ENCODE measurements at regions of chr20 and their contacts with region 1.

Region 1: DNA sequence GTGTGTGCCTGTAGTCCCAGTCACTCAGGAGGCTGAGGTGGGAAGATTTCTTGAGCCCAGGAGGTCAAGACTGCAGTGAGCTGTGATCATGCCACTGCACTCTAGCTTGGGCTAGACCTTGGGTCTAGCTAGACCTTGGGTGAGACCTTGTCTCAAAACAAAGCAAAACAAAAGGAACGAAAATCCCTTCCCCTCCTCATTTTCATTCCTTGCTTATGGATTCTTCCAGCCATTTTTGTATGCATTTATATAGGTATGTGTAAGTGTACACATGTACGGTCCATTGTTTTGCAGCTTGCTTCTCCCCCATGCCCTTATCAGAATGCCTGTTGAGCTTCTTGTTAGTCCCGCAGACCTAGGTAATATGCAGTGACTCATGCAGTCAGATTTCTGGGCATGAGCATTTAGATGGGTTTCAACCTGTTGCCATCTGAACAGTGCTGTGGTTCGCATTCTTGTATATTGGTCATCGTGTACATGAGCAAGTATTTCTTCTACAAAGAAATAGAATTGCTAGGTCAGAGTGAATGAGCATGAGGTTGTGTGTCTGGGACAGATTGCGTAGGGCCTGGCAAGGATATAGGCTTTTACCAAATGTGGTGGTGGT is 73.2 kb downstream of the ATRN start:
- DNase-seq: peak; percentile 78
- ATAC-seq: no peak
- H3K4me3 ChIP-seq: no peak overlapping the region
- H3K27ac ChIP-seq: peak overlapping the region; percentile 86
- H3K4me1 ChIP-seq: peaks cover 77% of the 10 kb centered on the region
- H3K27me3 ChIP-seq: no peaks in the 10 kb centered on the region
- CTCF ChIP-seq: no peak
- EP300 ChIP-seq: no peak
- POLR2A ChIP-seq: no peak
- RAD21 ChIP-seq: no peak

Region 2: GRCh38 chr20:3407771-3408637 is 136.0 kb before region 1 on chr20:
- CTCF ChIA-PET with region 1: no interaction called
- POLR2A ChIA-PET with region 1: no interaction called
- in situ Hi-C with region 1: no loop called
- intact Hi-C with region 1: loop called (anchors 10 kb)
- DNase-seq: peak; percentile 81
- ATAC-seq: peak; percentile 79
- H3K4me3 ChIP-seq: peak overlapping the region; percentile 68 to 90 (median 76)
- H3K27ac ChIP-seq: peak overlapping the region; percentile 67
- H3K4me1 ChIP-seq: peaks cover 46% of the 10 kb centered on the region
- H3K27me3 ChIP-seq: peaks cover 0 to 5% of the 10 kb centered on the region in 2 experiments; a peak in 1 of 5 replicates
- CTCF ChIP-seq: no peak
- EP300 ChIP-seq: 0 out of 4 replicates have a peak, but pooled peaks have one; percentile 5 to 40
- POLR2A ChIP-seq: peak; percentile 66 to 81
- RAD21 ChIP-seq: peak; percentile 7; the same call in 1 of the 2 replicates